Spleen (tissue), 13 donors: ENCODE measurements at regions of chr19 and their contacts with region 1.

Region 1: GRCh38 chr19:40822161-40822560 is 23.2 kb downstream of the EGLN2 start:
- DNase-seq: no peak
- H3K4me3 ChIP-seq: peak overlapping the region in 1 of 8 donors; percentile 44
- H3K27ac ChIP-seq: peak overlapping the region in 6 of 8 donors; percentile 51 to 87 (median 76)
- H3K4me1 ChIP-seq: peaks cover 18 to 68% (median 45%) of the 10 kb centered on the region in 6 donors
- H3K27me3 ChIP-seq: no peaks in the 10 kb centered on the region
- CTCF ChIP-seq: no peak
- POLR2A ChIP-seq: no peak

Region 2: GRCh38 chr19:40662921-40663694 is 159.1 kb before region 1 on chr19:
- intact Hi-C with region 1: loop called (anchors 5 kb)
- DNase-seq: peak; percentile 98
- H3K4me3 ChIP-seq: peak overlapping the region; percentile 64 to 94 (median 82)
- H3K27ac ChIP-seq: peak overlapping the region; percentile 68 to 94 (median 88)
- H3K4me1 ChIP-seq: peaks cover 0 to 23% (median 15%) of the 10 kb centered on the region in 6 donors
- H3K27me3 ChIP-seq: no peaks in the 10 kb centered on the region
- CTCF ChIP-seq: peak in 9 of 11 experiments; percentile 46 to 100 (median 99)
- POLR2A ChIP-seq: no peak

Region 3: DNA sequence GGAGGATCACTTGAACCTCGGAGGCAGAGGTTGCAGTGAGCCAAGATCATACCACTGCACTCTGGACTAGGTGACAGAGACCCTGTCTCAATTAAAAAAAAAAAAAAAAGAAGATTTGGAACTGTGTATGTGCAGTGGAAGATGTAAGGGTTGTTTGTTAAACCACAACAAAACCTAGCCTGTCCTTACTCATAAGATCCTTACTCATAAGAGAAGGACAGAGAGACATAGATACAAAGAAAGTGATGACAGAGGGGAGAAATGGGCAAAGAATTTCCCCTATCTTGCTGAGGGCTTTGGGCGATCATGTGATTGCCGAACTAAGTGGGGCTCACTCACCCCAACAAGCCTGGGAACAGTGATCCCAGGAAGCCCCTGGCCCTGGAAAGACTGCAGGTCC is 97.3 kb before region 1 on chr19:
- intact Hi-C with region 1: no loop called
- DNase-seq: no peak
- H3K4me3 ChIP-seq: no peak overlapping the region
- H3K27ac ChIP-seq: no peak overlapping the region
- H3K4me1 ChIP-seq: peaks cover 16 to 53% (median 31%) of the 10 kb centered on the region in 6 donors
- H3K27me3 ChIP-seq: no peaks in the 10 kb centered on the region
- CTCF ChIP-seq: no peak
- POLR2A ChIP-seq: no peak